H1 (cell line): ENCODE measurements at regions of chr6 and their contacts with region 1.

Region 1: GRCh38 chr6:15264902-15265761 is 19.3 kb downstream of the JARID2 start:
- DNase-seq: no peak
- H3K4me3 ChIP-seq: peak overlapping the region in 2 of 4 experiments; percentile 15 to 47; a peak in 4 of 8 replicates
- H3K27ac ChIP-seq: no peak overlapping the region
- H3K4me1 ChIP-seq: peaks cover 31 to 61% (median 50%) of the 10 kb centered on the region in 4 experiments
- H3K27me3 ChIP-seq: no peaks in the 10 kb centered on the region
- CTCF ChIP-seq: no peak
- EP300 ChIP-seq: peak in 1 of 2 experiments; percentile 40; a peak in 1 of 3 replicates
- POLR2A ChIP-seq: no peak
- RAD21 ChIP-seq: no peak; a peak in 1 of 4 replicates

Region 2: GRCh38 chr6:15248451-15249370 is 16.4 kb before region 1 on chr6:
- CTCF ChIA-PET with region 1: interaction called, 5 read pairs
- POLR2A ChIA-PET with region 1: interaction called, 21 read pairs
- DNase-seq: peak; percentile 67 to 91
- H3K4me3 ChIP-seq: peak overlapping the region; percentile 70 to 94 (median 78)
- H3K27ac ChIP-seq: no peak overlapping the region; the same call in 1 of the 2 replicates
- H3K4me1 ChIP-seq: peaks cover 3 to 11% (median 9%) of the 10 kb centered on the region in 4 experiments
- H3K27me3 ChIP-seq: no peaks in the 10 kb centered on the region
- CTCF ChIP-seq: peak; percentile 0 to 33 (median 2); a peak in 2 of 4 replicates
- EP300 ChIP-seq: peak in 1 of 2 experiments; percentile 80; a peak in 1 of 3 replicates
- POLR2A ChIP-seq: no peak
- RAD21 ChIP-seq: peak; percentile 21 to 28; a peak in 2 of 4 replicates

Region 3: GRCh38 chr6:15276036-15276985 is 11.2 kb after region 1 on chr6:
- CTCF ChIA-PET with region 1: interaction called, 4 read pairs
- POLR2A ChIA-PET with region 1: interaction called, 10 read pairs
- DNase-seq: no peak
- H3K4me3 ChIP-seq: peak overlapping the region in 1 of 4 experiments; percentile 18; a peak in 1 of 8 replicates
- H3K27ac ChIP-seq: no peak overlapping the region
- H3K4me1 ChIP-seq: peaks cover 12 to 40% (median 30%) of the 10 kb centered on the region in 4 experiments
- H3K27me3 ChIP-seq: no peaks in the 10 kb centered on the region
- CTCF ChIP-seq: no peak
- EP300 ChIP-seq: no peak
- POLR2A ChIP-seq: no peak
- RAD21 ChIP-seq: no peak